ENCODE measurements at regions of chr15 and their contacts with region 1.

Region 1: GRCh38 chr15:29631076-29632070 is 190.9 kb downstream of the TJP1 start:
- DNase-seq: no peak
- H3K4me3 ChIP-seq: no peak overlapping the region
- H3K27ac ChIP-seq: no peak overlapping the region
- H3K4me1 ChIP-seq: no peaks in the 10 kb centered on the region
- H3K27me3 ChIP-seq: peaks cover 0 to 20% of the 10 kb centered on the region in 2 donors
- CTCF ChIP-seq: no peak
- POLR2A ChIP-seq: no peak

Region 2: DNA sequence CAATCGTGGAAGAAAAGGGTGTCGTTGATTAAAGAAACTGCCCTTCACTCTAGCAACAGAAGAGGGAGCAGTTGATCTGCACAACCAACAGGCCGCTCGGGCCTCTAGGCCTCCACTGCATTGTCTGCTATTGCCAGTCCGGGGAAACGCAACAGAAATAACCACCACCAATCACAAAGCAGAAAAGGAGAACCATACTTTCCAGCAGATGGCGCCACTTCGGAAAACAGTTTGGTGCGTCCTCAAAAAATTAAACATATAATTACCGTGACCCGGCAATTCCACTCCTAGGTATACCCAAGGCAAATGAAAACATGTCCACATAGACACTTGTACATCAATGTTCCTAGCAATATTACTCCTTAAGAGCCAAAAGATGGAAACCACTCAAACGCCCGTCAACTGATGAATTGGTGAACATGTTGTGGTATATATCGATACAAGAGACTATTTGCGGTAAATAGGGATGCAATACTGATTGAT is 36.8 kb after region 1 on chr15:
- intact Hi-C with region 1: loop called (anchors 2 kb)
- DNase-seq: peak in 1 of 2 donors; percentile 68
- H3K4me3 ChIP-seq: no peak overlapping the region
- H3K27ac ChIP-seq: no peak overlapping the region
- H3K4me1 ChIP-seq: no peaks in the 10 kb centered on the region
- H3K27me3 ChIP-seq: no peaks in the 10 kb centered on the region
- CTCF ChIP-seq: peak; percentile 13 to 82 (median 57)
- POLR2A ChIP-seq: no peak